ENCODE measurements at regions of chr16 and their contacts with region 1.

Region 1: DNA sequence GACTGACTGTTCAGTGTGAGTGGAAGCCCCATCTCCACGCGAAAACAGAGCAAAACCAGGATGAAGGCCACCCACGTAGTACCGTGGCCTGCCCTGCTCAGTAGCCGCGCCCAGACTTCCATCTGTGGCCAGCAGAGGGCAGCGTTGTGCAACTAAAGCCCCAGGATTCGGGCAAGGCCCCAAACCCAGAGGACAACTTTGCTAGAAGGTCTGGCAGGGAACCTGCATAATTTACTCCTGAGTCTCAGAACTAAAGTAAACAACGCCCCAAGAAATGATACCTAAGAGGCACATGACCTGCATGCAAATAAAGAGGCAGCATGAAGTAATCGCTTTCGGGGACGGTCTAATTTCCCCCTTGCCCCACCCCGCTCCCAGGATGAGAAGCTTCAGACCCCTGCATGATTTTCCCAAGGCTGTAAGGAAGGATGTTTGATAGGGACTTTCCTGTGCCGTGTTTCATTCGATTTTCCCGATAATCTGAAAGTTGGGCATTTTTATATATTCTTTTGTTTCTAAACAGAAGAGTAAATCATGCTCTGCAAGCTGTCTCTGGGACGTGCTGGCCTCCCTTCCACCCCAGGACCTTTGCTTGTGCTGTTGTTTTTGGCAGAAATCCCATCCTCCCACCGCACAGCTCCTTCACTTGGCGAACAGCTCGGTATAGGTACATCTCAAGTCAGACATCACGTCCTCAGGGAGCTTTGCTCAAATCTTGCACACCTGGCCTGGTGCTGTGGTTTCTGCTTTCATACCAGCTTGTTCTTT is 18.6 kb downstream of the HSBP1 start:
- DNase-seq: peak; percentile 71
- H3K4me3 ChIP-seq: no peak overlapping the region
- H3K27ac ChIP-seq: no peak overlapping the region
- H3K27me3 ChIP-seq: peaks cover 6% of the 10 kb centered on the region
- CTCF ChIP-seq: peak; percentile 93

Region 2: GRCh38 chr16:83727018-83727417 is 99.3 kb before region 1 on chr16:
- CTCF ChIA-PET with region 1: no interaction called
- POLR2A ChIA-PET with region 1: no interaction called
- DNase-seq: peak; percentile 18
- H3K4me3 ChIP-seq: no peak overlapping the region
- H3K27ac ChIP-seq: no peak overlapping the region
- H3K27me3 ChIP-seq: no peaks in the 10 kb centered on the region
- CTCF ChIP-seq: no peak

Region 3: DNA sequence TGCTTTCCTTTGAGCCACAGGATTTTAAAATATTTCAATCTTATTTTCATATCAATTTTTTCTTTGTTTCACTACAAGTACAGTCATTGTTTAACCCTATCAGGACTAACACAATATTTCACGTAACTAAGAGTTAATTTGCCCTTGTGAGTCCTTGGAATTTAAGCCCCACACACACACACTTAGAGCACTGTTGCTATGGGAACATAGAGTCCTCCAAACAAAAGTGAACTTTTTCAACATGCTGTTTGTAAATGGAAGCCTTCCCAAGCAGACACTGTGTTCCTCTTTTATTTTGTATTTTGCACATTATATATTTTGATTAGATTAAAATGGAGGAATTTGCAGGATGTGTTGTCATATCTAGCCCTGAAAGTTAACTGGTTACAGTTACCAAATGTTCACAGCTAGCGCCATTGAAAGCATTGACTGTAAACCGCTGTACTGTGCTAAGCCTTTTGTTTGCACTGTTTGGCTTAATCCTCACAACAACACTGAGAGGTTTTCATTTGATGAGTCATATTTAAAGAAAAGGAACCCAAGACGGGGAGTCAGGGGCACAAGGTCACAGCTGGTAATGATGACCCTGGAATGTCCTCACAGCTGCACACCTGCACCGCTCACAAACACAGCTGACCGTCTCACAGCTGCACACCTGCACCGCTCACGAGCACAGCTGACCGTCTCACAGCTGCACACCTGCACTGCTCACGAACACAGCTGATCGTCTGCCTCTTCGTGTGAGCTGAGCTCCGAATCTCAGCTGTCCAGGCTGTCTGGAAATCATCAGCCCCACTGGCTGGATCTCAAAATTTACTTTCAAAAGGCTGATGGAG is 12.3 kb before region 1 on chr16:
- CTCF ChIA-PET with region 1: interaction called, 15 read pairs
- POLR2A ChIA-PET with region 1: no interaction called
- DNase-seq: peak; percentile 78
- H3K4me3 ChIP-seq: peak overlapping the region; percentile 1; the same call in 1 of the 2 replicates
- H3K27ac ChIP-seq: peak overlapping the region; percentile 52
- H3K27me3 ChIP-seq: peaks cover 15% of the 10 kb centered on the region
- CTCF ChIP-seq: no peak

Region 4: DNA sequence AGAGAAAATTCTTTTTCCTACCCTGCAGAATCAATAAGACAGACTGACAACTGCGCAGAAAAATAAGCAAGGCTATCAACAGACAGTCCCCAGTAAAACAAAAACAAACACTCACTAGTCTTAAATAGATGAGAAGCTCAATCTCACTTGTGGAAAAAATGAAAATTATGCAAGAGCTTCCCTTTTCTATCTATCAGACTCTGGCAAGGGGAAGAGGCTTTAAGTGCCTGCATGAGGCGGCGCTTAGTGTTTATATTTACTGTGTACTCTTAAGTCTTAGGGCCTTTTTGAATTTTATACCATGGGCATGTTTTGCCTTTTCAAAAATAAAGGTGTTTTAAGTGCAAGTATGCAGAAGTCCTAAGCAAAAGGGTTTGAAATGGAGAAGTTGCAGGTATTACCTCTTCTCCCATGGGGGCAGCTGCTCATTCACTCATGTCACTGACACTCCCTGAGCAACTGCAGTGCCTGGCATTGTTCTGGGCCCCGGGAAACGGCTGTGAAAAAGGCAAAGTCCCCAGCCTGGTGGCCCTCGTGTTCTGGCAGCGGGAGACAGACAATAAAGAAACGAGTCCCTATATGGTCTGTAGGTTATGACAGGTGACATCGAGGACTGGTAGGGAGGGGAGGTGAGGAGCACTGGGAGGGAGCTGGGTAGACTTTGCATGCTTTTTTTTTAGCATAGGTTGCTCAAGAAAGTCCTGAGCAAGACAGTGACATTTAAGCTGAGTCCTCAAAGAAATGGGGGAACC is 16.6 kb after region 1 on chr16:
- CTCF ChIA-PET with region 1: interaction called, 10 read pairs
- POLR2A ChIA-PET with region 1: no interaction called
- DNase-seq: no peak
- H3K4me3 ChIP-seq: no peak overlapping the region
- H3K27ac ChIP-seq: no peak overlapping the region
- H3K27me3 ChIP-seq: peaks cover 5% of the 10 kb centered on the region
- CTCF ChIP-seq: no peak

Region 5: DNA sequence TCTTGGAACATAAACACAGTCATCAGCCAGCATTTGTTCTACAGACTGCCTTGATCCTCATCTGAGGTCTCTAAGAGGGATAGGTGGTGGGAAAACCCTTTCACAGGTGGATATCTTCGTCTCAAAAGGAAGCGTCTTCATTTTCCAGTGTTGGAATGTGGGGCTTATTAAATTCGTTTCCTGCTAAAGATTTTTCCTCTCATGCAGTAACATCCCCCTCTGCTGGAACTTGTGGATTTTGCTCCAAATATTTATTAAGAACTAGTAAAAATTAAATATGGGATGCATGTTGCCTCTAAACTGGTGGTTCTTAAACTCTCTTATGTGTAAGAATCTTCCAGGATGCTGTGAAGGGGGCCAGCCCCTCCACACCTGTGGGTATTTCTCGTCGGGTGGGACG is 52.5 kb after region 1 on chr16:
- CTCF ChIA-PET with region 1: interaction called, 32 read pairs
- POLR2A ChIA-PET with region 1: no interaction called
- DNase-seq: peak; percentile 18
- H3K4me3 ChIP-seq: no peak overlapping the region
- H3K27ac ChIP-seq: no peak overlapping the region
- H3K27me3 ChIP-seq: peaks cover 31% of the 10 kb centered on the region
- CTCF ChIP-seq: peak; percentile 75